Activated T-helper 2 cell treated with anti-CD3 and anti-CD28 coated beads, Interferon-gamma antibody, Interleukin-2, Interleukin-4, amounts not matched to agents 10 μg/mL and 5 μg/mL and 100 μg/mL, durations not matched to agents 14 hours and 24 hours and 36 hours (primary cell): ENCODE measurements at regions of chr2 and their contacts with region 1.

Region 1: GRCh38 chr2:216006164-216006663 is 7.1 kb downstream of the MREG start:
- DNase-seq: peak; percentile 27
- H3K4me3 Mint-ChIP-seq: peak overlapping the region; percentile 62
- H3K27ac Mint-ChIP-seq: peak overlapping the region; percentile 96
- H3K4me1 Mint-ChIP-seq: peaks cover 47% of the 10 kb centered on the region
- H3K27me3 Mint-ChIP-seq: no peaks in the 10 kb centered on the region

Region 2: DNA sequence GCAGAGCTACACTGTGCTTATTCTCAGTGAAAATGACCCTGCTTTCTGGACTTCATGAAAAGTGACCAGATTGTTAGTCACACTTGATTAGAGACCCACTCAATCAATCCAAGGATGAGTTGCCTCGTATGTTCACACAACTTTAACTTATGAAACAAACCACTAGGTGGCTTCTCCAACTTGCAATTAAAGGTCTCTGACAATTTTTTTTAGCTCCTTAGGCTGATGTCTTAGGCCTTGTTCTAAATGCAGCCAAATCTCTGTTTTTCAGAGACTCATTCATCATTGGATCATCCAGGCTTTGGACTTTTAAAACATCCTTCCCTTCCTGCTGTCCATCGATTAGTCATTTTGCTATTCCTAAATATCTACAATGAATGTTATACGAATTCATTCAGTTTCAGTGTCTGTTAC is 56.2 kb before region 1 on chr2:
- intact Hi-C with region 1: no loop called
- DNase-seq: no peak
- H3K4me3 Mint-ChIP-seq: no peak overlapping the region
- H3K27ac Mint-ChIP-seq: no peak overlapping the region
- H3K4me1 Mint-ChIP-seq: peaks cover 9% of the 10 kb centered on the region
- H3K27me3 Mint-ChIP-seq: no peaks in the 10 kb centered on the region

Region 3: DNA sequence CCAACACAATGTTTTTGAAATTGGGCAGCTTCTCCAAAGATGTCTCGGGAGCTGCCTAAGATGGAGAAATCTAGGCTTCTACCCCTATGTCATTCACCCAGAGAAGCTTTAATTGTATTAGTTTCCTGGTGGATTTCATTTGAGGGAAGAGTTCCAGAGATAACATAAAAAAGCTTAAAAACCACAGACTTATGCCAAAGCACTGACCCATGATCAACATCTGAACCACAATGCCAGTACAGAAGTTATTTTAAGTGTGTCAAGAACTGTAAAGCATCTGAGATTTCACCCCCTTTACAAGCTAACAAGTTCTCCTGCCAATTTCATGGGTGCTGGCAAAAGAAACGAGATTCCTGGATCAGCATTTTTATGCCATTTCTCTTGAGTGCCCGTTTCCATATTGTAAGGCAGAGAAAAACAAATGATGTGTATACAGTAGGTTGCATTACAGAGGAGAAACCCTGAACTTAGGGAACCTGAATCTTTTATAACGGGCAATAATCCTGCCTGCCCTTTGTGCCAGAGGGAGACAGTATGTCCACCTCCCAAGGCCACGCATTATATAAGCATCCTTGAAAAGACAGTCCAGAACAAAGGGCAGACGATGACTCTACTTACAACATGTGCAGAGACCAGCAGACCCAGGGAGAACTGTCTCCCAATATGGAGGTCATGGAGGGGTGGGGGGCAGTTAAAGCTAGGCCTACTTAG is 36.9 kb before region 1 on chr2:
- intact Hi-C with region 1: loop called (anchors 5 kb)
- DNase-seq: no peak
- H3K4me3 Mint-ChIP-seq: no peak overlapping the region
- H3K27ac Mint-ChIP-seq: no peak overlapping the region
- H3K4me1 Mint-ChIP-seq: peaks cover 48% of the 10 kb centered on the region
- H3K27me3 Mint-ChIP-seq: no peaks in the 10 kb centered on the region

Region 4: DNA sequence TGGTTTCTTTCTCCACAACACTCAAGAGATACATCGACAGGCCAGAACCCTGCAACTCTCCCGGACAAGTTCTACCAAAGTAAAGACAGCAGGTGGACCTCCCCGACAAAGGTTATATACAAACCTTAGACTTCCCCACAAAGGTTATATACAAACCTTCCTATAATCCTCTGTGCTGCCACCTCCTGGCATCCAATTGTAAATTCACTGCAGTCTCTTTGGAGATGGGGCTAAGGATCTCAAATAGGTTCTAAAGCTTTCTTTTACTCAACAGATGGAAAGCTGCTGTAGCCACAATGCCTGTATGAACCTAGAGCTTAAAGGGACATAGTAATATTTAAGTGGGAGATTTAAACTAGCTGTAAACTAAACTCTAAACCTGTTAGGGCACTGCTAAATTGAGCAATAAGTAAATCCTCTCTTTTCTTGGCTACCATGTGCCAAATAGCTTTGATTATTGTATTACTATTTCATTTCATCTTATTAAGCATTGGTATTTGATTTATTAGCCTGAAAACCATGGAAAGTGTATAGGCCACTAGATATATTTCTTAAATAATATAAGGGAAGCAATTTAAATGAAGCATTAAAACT is 16.9 kb after region 1 on chr2:
- intact Hi-C with region 1: no loop called
- DNase-seq: no peak
- H3K4me3 Mint-ChIP-seq: no peak overlapping the region
- H3K27ac Mint-ChIP-seq: no peak overlapping the region
- H3K4me1 Mint-ChIP-seq: peaks cover 6% of the 10 kb centered on the region
- H3K27me3 Mint-ChIP-seq: no peaks in the 10 kb centered on the region

Region 5: GRCh38 chr2:216130346-216130971 is 124.2 kb after region 1 on chr2:
- intact Hi-C with region 1: no loop called
- DNase-seq: no peak
- H3K4me3 Mint-ChIP-seq: no peak overlapping the region
- H3K27ac Mint-ChIP-seq: peak overlapping the region; percentile 31
- H3K4me1 Mint-ChIP-seq: peaks cover 59% of the 10 kb centered on the region
- H3K27me3 Mint-ChIP-seq: no peaks in the 10 kb centered on the region